Activated CD8-positive, alpha-beta T cell treated with anti-CD3 and anti-CD28 coated beads for 36 hours (primary cell): ENCODE measurements at regions of chr16 and their contacts with region 1.

Region 1: GRCh38 chr16:68434624-68435197 is 13.6 kb downstream of the SMPD3 start:
- DNase-seq: no peak
- ATAC-seq: peak; percentile 27
- H3K4me3 Mint-ChIP-seq: no peak overlapping the region
- H3K27ac Mint-ChIP-seq: no peak overlapping the region
- H3K4me1 Mint-ChIP-seq: peaks cover 7% of the 10 kb centered on the region
- H3K27me3 Mint-ChIP-seq: no peaks in the 10 kb centered on the region
- CTCF ChIP-seq: no peak

Region 2: GRCh38 chr16:68445458-68445857 is 10.7 kb after region 1 on chr16:
- CTCF ChIA-PET with region 1: interaction called, 11 read pairs
- POLR2A ChIA-PET with region 1: no interaction called
- intact Hi-C with region 1: no loop called
- DNase-seq: peak; percentile 72
- ATAC-seq: no peak
- H3K4me3 Mint-ChIP-seq: no peak overlapping the region
- H3K27ac Mint-ChIP-seq: no peak overlapping the region
- H3K4me1 Mint-ChIP-seq: peaks cover 15% of the 10 kb centered on the region
- H3K27me3 Mint-ChIP-seq: peaks cover 32% of the 10 kb centered on the region
- CTCF ChIP-seq: peak; percentile 69